ENCODE measurements at regions of chr2 and their contacts with region 1.

Region 1: GRCh38 chr2:36461039-36461681 is 105.6 kb downstream of the CRIM1 start:
- DNase-seq: no peak
- ATAC-seq: peak in 1 of 2 donors; percentile 70
- H3K4me3 ChIP-seq: no peak overlapping the region
- H3K27ac ChIP-seq: no peak overlapping the region
- H3K4me1 ChIP-seq: peaks cover 10% of the 10 kb centered on the region
- H3K27me3 ChIP-seq: no peaks in the 10 kb centered on the region

Region 2: DNA sequence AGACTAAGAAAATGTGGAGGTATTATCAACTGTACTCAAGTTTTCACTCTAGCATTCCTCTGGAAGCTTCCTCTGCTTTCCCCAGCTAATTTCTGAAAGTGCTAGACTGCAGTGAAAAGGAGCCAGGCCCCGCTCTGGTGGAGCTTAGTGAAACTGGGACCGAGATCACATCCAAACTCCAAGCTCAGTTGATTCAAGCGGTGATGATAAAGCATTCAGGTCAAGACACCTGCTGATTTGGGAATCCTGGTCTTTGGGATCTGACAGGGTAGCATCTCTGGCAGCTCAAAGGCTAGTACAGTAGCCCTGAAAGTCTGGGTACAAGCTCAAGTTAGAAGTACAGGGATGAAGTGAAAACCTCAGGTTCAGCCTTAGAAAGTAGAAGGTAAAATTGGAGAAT is 225.7 kb before region 1 on chr2:
- intact Hi-C with region 1: no loop called
- DNase-seq: no peak
- ATAC-seq: no peak
- H3K4me3 ChIP-seq: no peak overlapping the region
- H3K27ac ChIP-seq: no peak overlapping the region
- H3K4me1 ChIP-seq: peaks cover 2% of the 10 kb centered on the region
- H3K27me3 ChIP-seq: no peaks in the 10 kb centered on the region

Region 3: GRCh38 chr2:36413218-36413617 is 47.9 kb before region 1 on chr2:
- intact Hi-C with region 1: loop called in 2 of 4 experiments (anchors 5 to 10 kb)
- DNase-seq: no peak
- ATAC-seq: peak; percentile 53 to 59
- H3K4me3 ChIP-seq: no peak overlapping the region
- H3K27ac ChIP-seq: no peak overlapping the region
- H3K4me1 ChIP-seq: peaks cover 12% of the 10 kb centered on the region
- H3K27me3 ChIP-seq: no peaks in the 10 kb centered on the region